ENCODE measurements at regions of chr1 and their contacts with region 1.

Region 1: GRCh38 chr1:27357281-27358037 is 9.3 kb downstream of the MAP3K6 start:
- DNase-seq: peak; percentile 87
- ATAC-seq: peak; percentile 70
- H3K4me3 Mint-ChIP-seq: peak overlapping the region; percentile 37
- H3K27ac Mint-ChIP-seq: no peak overlapping the region
- H3K4me1 Mint-ChIP-seq: peaks cover 17% of the 10 kb centered on the region
- H3K27me3 Mint-ChIP-seq: peaks cover 49% of the 10 kb centered on the region
- CTCF ChIP-seq: peak; percentile 100

Region 2: GRCh38 chr1:27192039-27192529 is 165.4 kb before region 1 on chr1:
- CTCF ChIA-PET with region 1: no interaction called
- POLR2A ChIA-PET with region 1: no interaction called
- DNase-seq: no peak
- ATAC-seq: no peak
- H3K4me3 Mint-ChIP-seq: no peak overlapping the region
- H3K27ac Mint-ChIP-seq: no peak overlapping the region
- H3K4me1 Mint-ChIP-seq: no peaks in the 10 kb centered on the region
- H3K27me3 Mint-ChIP-seq: peaks cover 2% of the 10 kb centered on the region; the same call in 1 of the 2 replicates
- CTCF ChIP-seq: no peak

Region 3: DNA sequence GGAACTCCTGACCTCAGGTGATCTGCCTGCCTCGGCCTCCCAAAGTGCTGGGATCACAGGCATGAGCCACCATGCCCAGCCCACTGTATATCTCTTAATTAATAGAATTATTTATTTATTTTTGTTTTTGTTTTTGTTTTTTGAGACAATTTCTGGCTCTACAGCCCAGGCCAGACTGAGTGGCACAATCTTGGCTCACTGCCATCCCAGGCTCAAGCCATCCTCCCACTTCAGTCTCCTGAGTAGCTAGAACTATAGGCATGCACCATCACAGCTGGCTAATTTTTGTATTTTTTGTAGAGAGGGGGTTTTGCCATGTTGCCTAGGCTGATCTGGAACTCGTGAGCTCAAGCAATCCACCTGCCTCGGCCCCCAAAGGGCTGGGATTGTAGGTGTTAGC is 138.7 kb before region 1 on chr1:
- CTCF ChIA-PET with region 1: no interaction called
- POLR2A ChIA-PET with region 1: no interaction called
- DNase-seq: no peak
- ATAC-seq: no peak
- H3K4me3 Mint-ChIP-seq: no peak overlapping the region
- H3K27ac Mint-ChIP-seq: no peak overlapping the region
- H3K4me1 Mint-ChIP-seq: no peaks in the 10 kb centered on the region
- H3K27me3 Mint-ChIP-seq: no peaks in the 10 kb centered on the region
- CTCF ChIP-seq: no peak

Region 4: DNA sequence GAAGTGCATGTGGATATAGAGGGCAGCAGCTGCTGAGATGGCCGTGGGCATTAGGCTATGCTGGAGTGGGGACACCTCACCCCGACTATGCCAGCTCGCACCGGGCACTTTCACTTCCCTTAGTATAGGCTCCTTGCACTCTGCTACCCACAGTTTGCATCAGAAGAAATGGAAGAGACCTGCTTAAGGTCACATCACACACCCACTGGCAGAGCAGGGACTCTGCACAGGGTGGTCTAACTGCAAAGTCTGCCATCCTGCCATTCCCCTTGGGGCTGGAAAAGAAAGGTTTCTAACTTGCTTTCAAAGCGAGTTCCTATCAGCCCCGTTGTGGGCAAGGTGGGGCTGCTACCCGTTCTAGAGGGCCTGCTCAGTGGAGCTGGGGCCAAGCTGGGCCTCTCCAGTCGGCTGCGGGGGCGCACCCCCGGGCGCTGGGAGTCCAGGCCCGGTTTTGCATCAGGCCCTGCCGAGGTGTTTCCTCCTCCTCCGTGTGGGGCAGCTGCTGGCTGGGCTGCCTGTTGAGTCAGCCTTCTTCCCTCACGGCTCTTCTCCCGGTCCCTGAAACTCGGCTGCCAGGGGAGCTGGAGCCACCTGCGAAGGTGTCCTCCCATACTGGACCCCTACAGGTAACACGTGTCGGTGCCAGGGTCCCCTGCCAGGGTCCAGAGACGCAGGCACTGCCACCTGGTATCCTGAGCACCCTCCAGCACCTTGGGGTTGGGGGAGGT is 15.8 kb before region 1 on chr1 and contains the start of gene SYTL1:
- CTCF ChIA-PET with region 1: interaction called, 36 read pairs
- POLR2A ChIA-PET with region 1: interaction called, 3 read pairs
- DNase-seq: peak; percentile 72
- ATAC-seq: peak; percentile 80
- H3K4me3 Mint-ChIP-seq: peak within 1 kb of the TSS; percentile 67
- H3K27ac Mint-ChIP-seq: peak within 1 kb of the TSS; percentile 38
- H3K4me1 Mint-ChIP-seq: peaks cover 39% of the 10 kb centered on the region
- H3K27me3 Mint-ChIP-seq: peaks cover 2% of the 10 kb centered on the region; the same call in 1 of the 2 replicates
- CTCF ChIP-seq: no peak
- total RNA-seq, gene SYTL1: 18.0 to 19.7 TPM (median 18.5 TPM) in 3 replicates

Region 5: DNA sequence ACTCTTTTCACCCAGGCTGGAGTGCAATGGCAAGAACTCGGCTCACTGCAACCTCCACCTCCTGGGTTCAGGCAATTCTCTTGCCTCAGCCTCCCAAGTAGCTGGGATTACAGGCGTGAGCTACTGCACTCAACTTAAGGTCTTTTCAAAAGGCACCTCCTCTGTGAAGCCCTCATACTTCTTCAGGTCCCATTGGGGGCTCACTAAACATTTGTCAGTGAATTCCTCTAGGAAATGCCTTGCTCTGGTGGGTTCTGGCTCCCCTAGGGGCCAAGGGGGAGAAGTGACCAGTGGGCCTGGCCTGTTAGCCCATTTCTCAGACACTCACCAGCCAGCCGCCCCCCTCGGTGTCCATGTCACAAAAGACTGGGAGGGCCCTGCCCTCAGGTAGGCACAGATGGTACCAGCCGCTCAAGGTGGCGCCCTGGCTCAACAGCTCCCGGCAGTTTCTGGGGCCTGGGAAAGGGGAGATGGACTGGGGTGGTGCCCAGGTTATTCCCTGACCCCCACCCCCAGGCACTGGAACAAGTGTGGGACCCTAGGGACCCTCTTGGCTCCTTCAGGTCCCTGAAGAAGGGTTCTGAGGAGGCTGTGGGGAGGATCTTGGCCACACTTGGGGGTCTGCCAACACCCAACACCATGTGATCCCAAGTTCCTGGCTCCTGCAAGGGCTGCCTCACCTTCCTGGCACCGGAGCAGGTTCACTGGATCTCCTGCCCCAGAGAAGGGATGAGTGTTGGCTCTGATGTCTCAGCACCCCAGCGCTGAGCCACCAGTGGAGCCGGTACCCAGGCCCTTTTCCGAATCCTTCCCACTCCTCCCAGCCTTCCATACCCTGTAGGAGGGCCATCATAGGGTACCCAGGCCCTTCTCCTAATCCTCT is 15.6 kb after region 1 on chr1:
- CTCF ChIA-PET with region 1: interaction called, 258 read pairs
- POLR2A ChIA-PET with region 1: no interaction called
- DNase-seq: peak; percentile 63
- ATAC-seq: peak; percentile 90
- H3K4me3 Mint-ChIP-seq: no peak overlapping the region
- H3K27ac Mint-ChIP-seq: no peak overlapping the region
- H3K4me1 Mint-ChIP-seq: peaks cover 9% of the 10 kb centered on the region
- H3K27me3 Mint-ChIP-seq: peaks cover 3% of the 10 kb centered on the region; the same call in 1 of the 2 replicates
- CTCF ChIP-seq: peak; percentile 48; the same call in 1 of the 2 replicates

Region 6: DNA sequence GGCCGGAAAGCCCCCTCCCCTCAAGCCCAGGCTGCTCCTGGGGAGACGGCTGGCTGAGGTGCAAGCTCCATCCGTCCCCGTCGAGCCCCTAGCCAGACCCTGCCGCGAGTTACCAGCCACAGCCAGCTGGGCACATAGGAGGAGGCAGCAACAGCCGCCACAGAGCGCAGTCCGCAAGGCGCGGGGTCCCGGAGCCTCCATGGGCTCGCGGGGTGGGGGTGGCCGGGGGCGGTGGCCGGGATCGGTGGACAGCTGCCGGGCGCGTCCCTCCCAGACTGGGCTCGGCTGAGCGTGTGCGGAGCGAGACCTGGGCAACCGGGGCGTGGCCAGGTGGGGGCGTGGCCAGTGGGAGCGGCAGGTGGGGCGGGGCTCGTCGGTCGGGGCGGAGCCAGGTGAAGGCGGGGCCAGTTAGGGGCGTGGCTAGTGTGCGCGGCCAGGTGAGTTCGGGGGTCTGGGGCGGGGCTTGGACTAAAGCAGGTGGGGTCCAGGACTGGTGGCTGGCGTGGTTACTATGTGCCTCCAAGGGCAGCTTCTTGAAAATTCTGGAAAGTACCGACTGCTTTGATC is 25.7 kb after region 1 on chr1 and contains the start of gene CD164L2:
- CTCF ChIA-PET with region 1: interaction called, 33 read pairs
- POLR2A ChIA-PET with region 1: no interaction called
- DNase-seq: peak; percentile 93
- ATAC-seq: peak; percentile 95
- H3K4me3 Mint-ChIP-seq: peak within 1 kb of the TSS; percentile 67
- H3K27ac Mint-ChIP-seq: no peak within 1 kb of the TSS
- H3K4me1 Mint-ChIP-seq: peaks cover 4% of the 10 kb centered on the region; the same call in 1 of the 2 replicates
- H3K27me3 Mint-ChIP-seq: peaks cover 31% of the 10 kb centered on the region
- CTCF ChIP-seq: no peak
- total RNA-seq, gene CD164L2: 3.0 to 5.5 TPM (median 4.3 TPM) in 3 replicates

Measured in WTC11 (cell line).